ENCODE measurements at regions of chr11 and their contacts with region 1.

Region 1: GRCh38 chr11:117232092-117232878 is at the start of gene RNF214:
- DNase-seq: peak; percentile 86
- H3K4me3 ChIP-seq: peak within 1 kb of the TSS; percentile 79 to 98 (median 92)
- H3K27ac ChIP-seq: peak within 1 kb of the TSS; percentile 95 to 99 (median 96)
- H3K4me1 ChIP-seq: peaks cover 2 to 38% (median 32%) of the 10 kb centered on the region in 4 donors
- H3K27me3 ChIP-seq: no peaks in the 10 kb centered on the region
- CTCF ChIP-seq: peak; percentile 80 to 94 (median 84)
- EP300 ChIP-seq: no peak
- POLR2A ChIP-seq: peak; percentile 39 to 57
- total RNA-seq, gene RNF214: 11.1 to 23.8 (median 12.8) TPM

Region 2: DNA sequence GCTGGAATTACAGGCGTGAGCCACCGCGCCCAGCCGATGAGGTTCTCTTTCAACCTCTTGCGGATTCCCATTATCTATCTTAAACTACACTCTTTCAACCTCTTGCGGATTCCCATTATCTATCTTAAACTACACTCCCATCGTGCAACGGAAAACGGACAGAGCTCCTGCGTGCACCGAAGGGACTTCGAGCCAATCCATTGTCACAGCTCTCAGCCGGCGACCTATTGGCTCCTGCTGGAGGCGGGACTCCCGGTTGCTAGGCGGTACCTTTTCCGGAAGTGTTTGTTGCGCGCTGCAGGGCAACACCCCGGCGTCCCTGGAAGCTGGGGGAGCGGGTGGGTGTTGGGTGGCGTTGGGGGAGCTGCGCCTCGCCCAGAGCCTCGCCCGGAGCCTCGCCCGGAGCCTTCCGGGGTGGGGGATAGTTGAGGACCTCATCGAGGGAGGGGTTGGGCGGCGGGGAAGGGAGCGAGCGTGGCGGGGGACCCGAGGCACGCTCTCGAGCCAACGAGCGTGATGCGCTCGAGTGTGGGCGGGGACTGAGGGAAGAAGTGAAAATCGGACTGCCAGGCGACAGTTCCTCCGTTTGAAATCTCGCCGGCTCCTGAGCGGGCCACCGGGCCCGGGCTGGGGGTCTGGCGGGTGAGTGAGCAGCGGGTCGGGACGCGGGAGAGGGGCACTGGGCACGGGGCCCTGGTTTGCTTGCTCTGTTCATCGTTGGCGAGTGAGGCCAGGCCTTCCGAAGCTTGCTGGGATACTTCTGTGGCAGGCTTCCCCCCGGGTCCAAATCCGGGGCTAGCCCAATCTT is 95.5 kb after region 1 on chr11 and contains the start of gene CEP164:
- intact Hi-C with region 1: loop called (anchors 1 kb)
- DNase-seq: peak; percentile 98
- H3K4me3 ChIP-seq: peak within 1 kb of the TSS; percentile 67 to 84 (median 80)
- H3K27ac ChIP-seq: peak within 1 kb of the TSS; percentile 94 to 96 (median 94)
- H3K4me1 ChIP-seq: peaks cover 0 to 18% (median 12%) of the 10 kb centered on the region in 4 donors
- H3K27me3 ChIP-seq: no peaks in the 10 kb centered on the region
- CTCF ChIP-seq: no peak
- EP300 ChIP-seq: no peak
- POLR2A ChIP-seq: peak; percentile 48 to 75
- total RNA-seq, gene CEP164: 12.5 to 40.4 (median 20.4) TPM

Measured in sigmoid colon (tissue), 7 donors.